ENCODE measurements at regions of chr21 and their contacts with region 1.

Region 1: DNA sequence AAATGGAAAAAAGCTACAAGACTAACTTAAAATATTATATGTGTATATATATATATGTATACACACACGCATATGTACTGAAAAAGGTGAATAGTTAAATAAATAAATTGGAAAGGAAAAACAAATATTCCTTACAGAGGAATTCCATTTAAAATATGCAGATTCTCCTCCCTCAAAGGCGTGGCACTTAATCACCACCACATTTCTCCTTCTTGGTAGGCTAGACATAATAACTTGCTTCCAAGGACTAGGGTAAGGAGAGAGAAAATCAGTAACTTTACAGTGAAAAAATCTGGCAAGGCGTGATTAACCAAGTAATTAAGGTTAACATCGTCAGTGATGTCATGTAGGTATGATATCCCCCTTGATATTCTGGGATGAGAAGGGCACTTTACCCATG is 84.0 kb upstream of the USP25 start:
- DNase-seq: no peak
- ATAC-seq: no peak
- H3K4me3 ChIP-seq: no peak overlapping the region
- H3K4me3 Mint-ChIP-seq: no peak overlapping the region
- H3K27ac ChIP-seq: no peak overlapping the region
- H3K27ac Mint-ChIP-seq: no peak overlapping the region
- H3K4me1 ChIP-seq: no peaks in the 10 kb centered on the region
- H3K4me1 Mint-ChIP-seq: no peaks in the 10 kb centered on the region
- H3K27me3 ChIP-seq: no peaks in the 10 kb centered on the region
- H3K27me3 Mint-ChIP-seq: no peaks in the 10 kb centered on the region
- CTCF ChIP-seq: no peak

Region 2: DNA sequence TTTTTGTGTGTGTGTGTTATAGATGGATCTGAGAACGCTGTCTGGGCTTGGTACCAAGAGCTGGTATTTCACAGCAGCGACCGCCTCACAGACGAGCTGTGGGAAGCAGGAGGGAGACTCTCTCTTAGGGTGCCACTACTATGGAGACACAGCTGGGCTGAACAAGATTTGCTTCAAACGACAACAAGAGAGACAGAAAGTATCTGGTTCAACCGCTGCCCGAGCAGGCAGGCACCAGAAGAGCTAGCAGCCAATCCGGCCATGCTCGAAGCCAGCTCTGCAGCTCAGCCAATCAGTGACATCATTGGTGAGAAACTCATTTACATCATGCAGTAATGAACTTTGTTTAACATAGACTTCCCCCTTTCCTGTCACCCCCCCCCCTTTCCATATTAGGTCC is 425.3 kb after region 1 on chr21:
- CTCF ChIA-PET with region 1: no interaction called
- POLR2A ChIA-PET with region 1: no interaction called
- intact Hi-C with region 1: no loop called
- DNase-seq: no peak
- ATAC-seq: no peak
- H3K4me3 ChIP-seq: no peak overlapping the region
- H3K4me3 Mint-ChIP-seq: no peak overlapping the region
- H3K27ac ChIP-seq: no peak overlapping the region
- H3K27ac Mint-ChIP-seq: no peak overlapping the region
- H3K4me1 ChIP-seq: no peaks in the 10 kb centered on the region
- H3K4me1 Mint-ChIP-seq: no peaks in the 10 kb centered on the region
- H3K27me3 ChIP-seq: no peaks in the 10 kb centered on the region
- H3K27me3 Mint-ChIP-seq: peaks cover 2% of the 10 kb centered on the region
- CTCF ChIP-seq: no peak

Region 3: DNA sequence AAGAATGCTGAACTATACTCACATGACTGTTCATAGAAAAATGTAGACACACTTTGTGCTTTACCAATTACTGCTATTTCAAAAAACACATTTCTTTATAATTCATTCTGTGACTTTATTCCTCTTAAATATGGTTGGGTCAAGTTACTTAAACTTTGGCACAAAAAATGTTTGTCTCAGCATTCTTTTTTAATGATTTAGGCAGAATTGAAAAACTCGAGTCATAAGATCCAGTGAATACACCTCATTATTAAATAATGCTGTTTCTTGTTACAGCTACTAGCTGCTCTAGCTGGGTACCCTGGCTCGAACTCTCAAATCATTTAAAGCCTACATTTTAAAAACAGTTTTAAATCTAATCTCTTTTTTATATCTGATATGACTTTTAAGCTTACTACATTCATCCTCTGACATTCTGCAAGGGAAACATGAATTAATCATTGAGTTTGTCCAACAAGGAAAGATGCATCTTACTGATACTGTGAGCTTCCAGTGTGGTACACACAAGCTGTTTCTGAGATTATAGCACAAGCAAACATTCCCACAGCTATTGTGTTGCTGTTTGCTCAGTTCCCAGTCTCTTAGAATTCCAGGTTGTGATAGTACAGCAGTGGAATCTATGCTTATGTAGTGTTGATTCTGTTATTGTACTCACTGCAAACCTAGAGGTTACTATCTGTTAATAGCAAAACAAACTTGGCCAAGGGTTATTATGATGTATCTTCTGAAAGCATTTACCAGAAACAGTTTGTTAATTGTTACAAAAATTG is 830.4 kb after region 1 on chr21:
- CTCF ChIA-PET with region 1: no interaction called
- POLR2A ChIA-PET with region 1: no interaction called
- intact Hi-C with region 1: loop called in 1 of 2 experiments (anchors 5 kb)
- DNase-seq: no peak
- ATAC-seq: no peak
- H3K4me3 ChIP-seq: no peak overlapping the region
- H3K4me3 Mint-ChIP-seq: no peak overlapping the region
- H3K27ac ChIP-seq: no peak overlapping the region
- H3K27ac Mint-ChIP-seq: no peak overlapping the region
- H3K4me1 ChIP-seq: no peaks in the 10 kb centered on the region
- H3K4me1 Mint-ChIP-seq: no peaks in the 10 kb centered on the region
- H3K27me3 ChIP-seq: no peaks in the 10 kb centered on the region
- H3K27me3 Mint-ChIP-seq: no peaks in the 10 kb centered on the region
- CTCF ChIP-seq: no peak

Measured in CD8-positive, alpha-beta T cell (primary cell).